Transverse colon (tissue), 4 donors: ENCODE measurements at regions of chr14 and their contacts with region 1.

Region 1: GRCh38 chr14:76456200-76456599 is 80.3 kb downstream of the ESRRB start:
- DNase-seq: no peak
- H3K4me3 ChIP-seq: no peak overlapping the region
- H3K27ac ChIP-seq: no peak overlapping the region
- H3K4me1 ChIP-seq: no peaks in the 10 kb centered on the region
- H3K27me3 ChIP-seq: no peaks in the 10 kb centered on the region
- CTCF ChIP-seq: peak; percentile 16 to 40 (median 36)
- EP300 ChIP-seq: no peak
- POLR2A ChIP-seq: no peak

Region 2: DNA sequence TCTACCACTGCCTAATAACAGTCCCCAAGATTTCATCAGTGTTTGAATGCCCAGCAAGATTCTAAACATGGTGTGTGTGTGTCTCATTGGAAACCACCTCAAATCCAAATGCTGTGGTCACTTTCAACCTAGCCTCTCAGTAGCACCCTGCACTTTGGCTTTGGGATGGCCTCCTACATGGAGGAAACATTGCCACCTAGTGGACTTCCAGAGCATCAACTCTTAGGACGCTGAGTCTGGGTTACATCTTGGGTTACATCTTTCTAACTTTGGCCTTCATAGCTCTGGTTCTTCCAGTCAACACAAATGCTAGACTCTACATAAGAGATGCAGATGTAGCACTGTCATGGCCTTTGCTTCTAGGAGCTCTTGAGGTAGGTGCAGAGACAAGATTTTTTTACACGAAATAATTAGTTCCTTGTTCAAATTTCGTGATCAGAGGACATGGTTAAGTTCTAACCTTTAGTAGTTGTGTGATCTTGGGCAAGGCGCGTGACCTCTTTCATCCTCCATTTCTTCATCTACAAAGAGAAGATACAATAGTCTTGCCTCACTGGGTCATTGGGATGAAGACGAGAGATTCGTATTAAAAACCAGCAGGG is 191.6 kb after region 1 on chr14:
- in situ Hi-C with region 1: loop called in 1 of 4 experiments (anchors 10 kb)
- intact Hi-C with region 1: loop called (anchors 5 kb)
- DNase-seq: peak; percentile 10
- H3K4me3 ChIP-seq: no peak overlapping the region
- H3K27ac ChIP-seq: no peak overlapping the region
- H3K4me1 ChIP-seq: no peaks in the 10 kb centered on the region
- H3K27me3 ChIP-seq: no peaks in the 10 kb centered on the region
- CTCF ChIP-seq: peak; percentile 61 to 75 (median 72)
- EP300 ChIP-seq: no peak
- POLR2A ChIP-seq: no peak